Aorta (tissue), 5 donors: ENCODE measurements at regions of chr11 and their contacts with region 1.

Region 1: DNA sequence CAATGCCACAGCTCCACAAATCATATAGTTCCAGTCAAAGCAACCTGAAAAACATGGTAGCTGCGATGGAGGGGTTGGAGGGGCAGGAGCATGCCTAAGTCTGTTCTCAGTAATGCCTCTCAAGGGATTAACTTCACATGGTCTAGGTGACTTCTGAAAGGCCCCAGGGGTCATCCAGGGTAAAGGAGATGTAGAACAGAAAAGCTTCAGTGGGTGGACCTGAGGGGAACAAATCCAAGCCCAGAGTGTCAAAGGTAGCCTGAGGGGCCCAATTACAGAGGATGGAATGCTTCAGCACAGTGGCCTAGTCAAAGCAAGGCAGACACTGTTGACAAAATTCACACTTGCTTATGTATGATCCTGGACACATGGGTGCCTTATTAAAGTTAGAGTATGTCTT is 23.3 kb downstream of the OR4D9 start:
- DNase-seq: no peak
- ATAC-seq: no peak
- H3K4me3 ChIP-seq: no peak overlapping the region
- H3K27ac ChIP-seq: no peak overlapping the region
- H3K4me1 ChIP-seq: no peaks in the 10 kb centered on the region
- H3K27me3 ChIP-seq: no peaks in the 10 kb centered on the region

Region 2: DNA sequence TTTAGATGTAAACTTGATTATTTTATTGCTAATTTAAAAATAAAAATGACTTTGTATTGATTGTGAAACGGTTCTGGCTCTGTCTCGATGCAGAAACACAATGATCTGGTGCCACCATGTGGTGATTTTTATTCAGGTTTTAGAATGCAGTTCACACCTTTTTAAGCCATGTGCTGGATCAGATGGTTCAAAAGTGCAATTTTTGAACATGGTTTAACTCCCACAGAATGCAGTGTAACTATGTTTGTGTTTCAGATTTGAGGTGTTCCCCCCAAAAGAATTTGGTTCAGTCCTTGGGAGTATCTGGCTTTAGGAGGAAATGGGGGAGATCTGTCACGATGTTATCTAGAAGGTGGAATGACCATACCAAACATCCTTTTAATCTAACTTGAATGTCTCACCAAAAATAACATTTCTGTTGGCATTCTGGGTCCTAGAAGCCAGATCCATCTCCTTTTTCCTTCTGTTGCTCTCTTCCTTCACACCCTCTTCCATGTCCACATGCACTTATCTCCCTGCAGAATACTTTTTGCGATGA is 268.0 kb after region 1 on chr11:
- intact Hi-C with region 1: loop called (anchors 10 kb)
- DNase-seq: no peak
- ATAC-seq: peak; percentile 88
- H3K4me3 ChIP-seq: no peak overlapping the region
- H3K27ac ChIP-seq: no peak overlapping the region
- H3K4me1 ChIP-seq: no peaks in the 10 kb centered on the region
- H3K27me3 ChIP-seq: no peaks in the 10 kb centered on the region